ENCODE measurements at regions of chr2 and their contacts with region 1.

Region 1: DNA sequence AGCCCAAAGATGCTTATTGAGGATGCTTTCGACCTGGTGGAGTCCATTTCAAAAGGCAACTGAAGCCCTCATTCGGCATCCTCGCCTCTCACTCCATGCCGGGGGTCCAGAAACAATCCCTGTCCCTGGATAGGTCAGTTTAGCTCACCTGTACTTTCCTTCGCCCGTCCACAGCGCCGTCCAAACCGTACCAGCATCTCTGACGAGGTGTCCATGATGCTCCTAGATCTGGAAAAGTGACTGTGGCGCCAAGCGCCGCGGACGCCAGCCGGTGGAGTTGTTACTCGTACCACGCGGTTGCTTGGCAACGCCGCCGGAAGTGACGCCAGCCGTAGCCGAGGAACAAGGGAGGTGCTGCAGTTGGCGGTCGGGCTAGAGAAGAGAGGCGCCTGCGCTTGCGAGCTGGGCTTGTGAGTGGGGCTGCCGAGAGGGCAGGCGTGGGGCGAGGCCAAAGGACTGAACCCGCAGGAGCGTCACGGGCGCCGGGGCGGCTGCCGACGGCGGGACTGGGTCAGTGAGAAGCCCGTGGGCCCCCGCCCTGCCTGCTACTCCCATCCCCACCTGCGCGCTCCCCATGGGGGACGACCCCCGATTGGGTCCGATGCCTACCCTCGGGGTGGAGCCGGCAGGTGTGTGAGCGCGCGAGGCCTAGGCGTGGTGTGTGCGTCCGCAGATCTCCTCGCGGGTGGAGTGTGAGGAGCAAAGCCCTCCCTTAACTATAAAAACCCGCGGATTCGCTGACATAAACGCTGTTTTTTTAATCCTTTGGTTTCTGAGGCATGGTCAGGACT is at the starts of genes CFAP210 and PHOSPHO2:
- DNase-seq: peak; percentile 95 to 100 (median 99)
- ATAC-seq: peak; percentile 96 to 99 (median 98)
- H3K4me3 ChIP-seq: peak within 1 kb of the TSS; percentile 69 to 80
- H3K4me3 Mint-ChIP-seq: peak within 1 kb of the TSS; percentile 83 to 97 (median 87)
- H3K27ac ChIP-seq: peak within 1 kb of the TSS; percentile 88
- H3K27ac Mint-ChIP-seq: peak within 1 kb of the TSS; percentile 88 to 92
- H3K4me1 ChIP-seq: peaks cover 3 to 9% of the 10 kb centered on the region in 2 experiments
- H3K4me1 Mint-ChIP-seq: peaks cover 13 to 18% (median 17%) of the 10 kb centered on the region in 3 donors
- H3K27me3 ChIP-seq: no peaks in the 10 kb centered on the region
- H3K27me3 Mint-ChIP-seq: peaks cover 5 to 9% of the 10 kb centered on the region in 2 donors
- total RNA-seq, gene CFAP210: 0.35 to 0.96 TPM in 2 of 5 donors, not detected in the others
- total RNA-seq, gene PHOSPHO2: 3.6 to 8.6 (median 6.1) TPM

Region 2: GRCh38 chr2:169584005-169584877 is 110.1 kb before region 1 on chr2 and contains the start of gene PPIG:
- CTCF ChIA-PET with region 1: no interaction called
- POLR2A ChIA-PET with region 1: interaction called in 1 of 2 experiments, 18 read pairs
- DNase-seq: peak; percentile 69 to 96 (median 87)
- ATAC-seq: peak; percentile 88 to 97 (median 94)
- H3K4me3 ChIP-seq: peak within 1 kb of the TSS; percentile 92 to 98
- H3K4me3 Mint-ChIP-seq: peak within 1 kb of the TSS; percentile 99
- H3K27ac ChIP-seq: peak within 1 kb of the TSS; percentile 99
- H3K27ac Mint-ChIP-seq: peak within 1 kb of the TSS; percentile 98 to 99
- H3K4me1 ChIP-seq: peaks cover 16 to 29% of the 10 kb centered on the region in 2 experiments
- H3K4me1 Mint-ChIP-seq: peaks cover 36 to 47% (median 39%) of the 10 kb centered on the region in 3 donors
- H3K27me3 ChIP-seq: no peaks in the 10 kb centered on the region
- H3K27me3 Mint-ChIP-seq: no peaks in the 10 kb centered on the region
- total RNA-seq, gene PPIG: 63.6 to 78.2 (median 71.3) TPM

Region 3: GRCh38 chr2:169683054-169683424 is 11.3 kb before region 1 on chr2:
- CTCF ChIA-PET with region 1: interaction called, 3 to 9 read pairs
- POLR2A ChIA-PET with region 1: interaction called in 1 of 2 experiments, 25 read pairs
- DNase-seq: peak in 1 of 35 experiments; percentile 59
- ATAC-seq: peak in 3 of 4 experiments; percentile 37 to 75 (median 43)
- H3K4me3 ChIP-seq: no peak overlapping the region
- H3K4me3 Mint-ChIP-seq: no peak overlapping the region
- H3K27ac ChIP-seq: peak overlapping the region; percentile 48
- H3K27ac Mint-ChIP-seq: peak overlapping the region; percentile 22 to 76
- H3K4me1 ChIP-seq: no peaks in the 10 kb centered on the region
- H3K4me1 Mint-ChIP-seq: peaks cover 0 to 16% (median 6%) of the 10 kb centered on the region in 3 donors
- H3K27me3 ChIP-seq: no peaks in the 10 kb centered on the region
- H3K27me3 Mint-ChIP-seq: no peaks in the 10 kb centered on the region

Region 4: DNA sequence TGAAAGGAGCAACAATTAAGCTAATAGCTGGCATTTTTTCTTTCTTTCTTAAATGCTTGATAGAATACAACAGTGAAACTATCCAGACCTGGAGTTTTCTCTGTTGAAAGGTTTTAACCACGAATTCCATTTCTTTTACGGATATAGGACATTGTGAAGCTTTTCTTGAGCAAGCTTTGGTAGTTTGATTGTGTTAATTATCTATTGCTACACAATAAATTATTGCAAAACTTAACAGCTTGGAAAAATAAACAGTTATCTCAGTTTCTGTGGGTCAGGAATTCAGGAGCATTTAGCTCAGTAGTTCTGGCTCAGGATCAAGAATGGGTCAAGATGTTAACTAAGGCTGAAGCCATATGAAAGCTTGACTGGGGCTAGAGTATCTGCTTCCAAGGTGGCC is 11.6 kb after region 1 on chr2:
- CTCF ChIA-PET with region 1: interaction called, 3 to 5 read pairs
- POLR2A ChIA-PET with region 1: interaction called, 4 to 13 read pairs
- DNase-seq: no peak
- ATAC-seq: no peak
- H3K4me3 ChIP-seq: no peak overlapping the region
- H3K4me3 Mint-ChIP-seq: no peak overlapping the region
- H3K27ac ChIP-seq: no peak overlapping the region
- H3K27ac Mint-ChIP-seq: no peak overlapping the region
- H3K4me1 ChIP-seq: no peaks in the 10 kb centered on the region
- H3K4me1 Mint-ChIP-seq: no peaks in the 10 kb centered on the region
- H3K27me3 ChIP-seq: no peaks in the 10 kb centered on the region
- H3K27me3 Mint-ChIP-seq: no peaks in the 10 kb centered on the region